Cardiac septum (tissue), 1 donor: ENCODE measurements at regions of chr11 and their contacts with region 1.

Region 1: DNA sequence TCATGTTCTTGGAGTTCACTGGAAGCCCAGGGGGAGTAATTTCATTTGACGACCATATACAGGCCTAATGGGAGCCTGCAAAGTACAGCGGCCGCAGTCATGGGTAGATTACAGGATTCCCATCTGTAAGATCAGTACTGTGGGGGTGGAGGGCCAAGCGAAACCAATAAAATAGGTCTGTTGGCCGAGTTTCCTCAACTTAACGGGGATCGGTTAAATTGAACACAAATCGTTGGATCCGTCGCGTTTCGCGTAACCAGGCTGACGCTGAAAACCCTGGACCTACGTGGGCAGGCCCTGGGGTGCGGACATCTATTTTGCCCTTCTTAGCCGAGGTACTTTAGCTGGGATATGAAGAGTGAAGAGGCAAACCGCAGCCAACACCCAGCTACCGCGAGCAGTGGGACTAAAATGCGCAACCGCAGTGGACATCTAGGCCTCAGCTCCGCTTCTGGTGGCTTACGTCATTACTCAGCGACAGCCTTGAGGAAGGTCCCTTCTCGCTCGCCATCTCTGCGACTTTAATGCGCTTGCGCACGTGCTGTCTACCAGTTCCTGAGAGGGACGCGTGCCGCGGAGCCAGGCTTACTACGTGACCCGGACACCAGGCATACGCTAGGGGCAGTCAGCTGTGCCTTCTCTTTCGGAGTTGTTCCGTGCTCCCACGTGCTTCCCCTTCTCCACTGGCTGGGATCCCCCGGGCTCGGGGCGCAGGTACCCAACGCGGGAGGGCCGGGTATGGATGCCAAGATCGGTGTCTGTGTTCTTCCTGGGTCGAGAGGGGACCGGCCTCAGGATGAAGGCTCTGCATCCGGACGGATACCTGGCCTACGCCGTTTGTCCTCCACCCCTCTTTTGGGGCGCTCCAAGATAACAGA is at the start of gene NAT10:
- DNase-seq: peak; percentile 98
- total RNA-seq, gene NAT10: 23.2 TPM

Region 2: DNA sequence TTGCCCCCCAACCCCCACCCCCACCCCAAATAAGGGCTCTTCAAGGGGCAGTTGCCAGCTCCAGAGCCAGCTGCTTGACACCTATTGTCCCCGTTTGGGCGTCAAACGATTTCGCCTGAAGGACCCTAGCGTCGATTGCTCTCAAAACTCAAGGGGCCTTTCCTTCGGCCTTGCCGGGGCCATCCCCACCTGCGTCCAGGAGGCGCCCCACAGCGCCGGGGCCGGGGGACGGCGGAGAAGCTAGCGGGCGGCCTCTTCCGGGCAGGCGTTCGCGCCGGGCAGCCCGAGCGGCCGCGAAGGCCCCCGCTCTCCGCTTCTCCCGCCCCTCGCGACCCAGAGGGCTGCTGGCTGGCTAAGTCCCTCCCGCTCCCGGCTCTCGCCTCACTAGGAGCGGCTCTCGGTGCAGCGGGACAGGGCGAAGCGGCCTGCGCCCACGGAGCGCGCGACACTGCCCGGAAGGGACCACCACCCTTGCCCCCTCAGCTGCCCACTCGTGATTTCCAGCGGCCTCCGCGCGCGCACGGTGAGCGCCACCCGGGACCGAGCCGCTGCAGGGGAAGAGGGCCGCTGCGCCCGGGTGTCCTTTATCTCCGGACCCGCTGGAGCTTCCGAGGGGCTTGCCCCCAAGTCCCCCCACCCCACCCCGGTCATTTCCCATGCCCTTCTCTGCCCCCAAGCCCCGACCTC is 53.8 kb before region 1 on chr11 and contains the start of gene CAPRIN1:
- intact Hi-C with region 1: loop called (anchors 1 kb)
- DNase-seq: peak; percentile 94
- total RNA-seq, gene CAPRIN1: 108 TPM

Region 3: GRCh38 chr11:34149786-34150185 is 44.5 kb after region 1 on chr11:
- intact Hi-C with region 1: no loop called
- DNase-seq: peak; percentile 64

Region 4: GRCh38 chr11:34916015-34916842 is 810.9 kb after region 1 on chr11 and contains the starts of genes APIP and PDHX:
- intact Hi-C with region 1: loop called (anchors 10 kb)
- DNase-seq: peak; percentile 99
- total RNA-seq, gene APIP: 36.5 TPM
- total RNA-seq, gene PDHX: 118 TPM